Activated CD4-positive, alpha-beta memory T cell treated with anti-CD3 and anti-CD28 coated beads, Interleukin-2, amount 10 ng/mL, durations not matched to agents 7 days and 5 days (primary cell): ENCODE measurements at regions of chr10 and their contacts with region 1.

Region 1: GRCh38 chr10:88835096-88835909 is 16.3 kb downstream of the ANKRD22 start:
- DNase-seq: peak; percentile 91
- H3K4me3 Mint-ChIP-seq: no peak overlapping the region
- H3K27ac Mint-ChIP-seq: no peak overlapping the region
- H3K4me1 Mint-ChIP-seq: peaks cover 32% of the 10 kb centered on the region
- H3K27me3 Mint-ChIP-seq: no peaks in the 10 kb centered on the region

Region 2: DNA sequence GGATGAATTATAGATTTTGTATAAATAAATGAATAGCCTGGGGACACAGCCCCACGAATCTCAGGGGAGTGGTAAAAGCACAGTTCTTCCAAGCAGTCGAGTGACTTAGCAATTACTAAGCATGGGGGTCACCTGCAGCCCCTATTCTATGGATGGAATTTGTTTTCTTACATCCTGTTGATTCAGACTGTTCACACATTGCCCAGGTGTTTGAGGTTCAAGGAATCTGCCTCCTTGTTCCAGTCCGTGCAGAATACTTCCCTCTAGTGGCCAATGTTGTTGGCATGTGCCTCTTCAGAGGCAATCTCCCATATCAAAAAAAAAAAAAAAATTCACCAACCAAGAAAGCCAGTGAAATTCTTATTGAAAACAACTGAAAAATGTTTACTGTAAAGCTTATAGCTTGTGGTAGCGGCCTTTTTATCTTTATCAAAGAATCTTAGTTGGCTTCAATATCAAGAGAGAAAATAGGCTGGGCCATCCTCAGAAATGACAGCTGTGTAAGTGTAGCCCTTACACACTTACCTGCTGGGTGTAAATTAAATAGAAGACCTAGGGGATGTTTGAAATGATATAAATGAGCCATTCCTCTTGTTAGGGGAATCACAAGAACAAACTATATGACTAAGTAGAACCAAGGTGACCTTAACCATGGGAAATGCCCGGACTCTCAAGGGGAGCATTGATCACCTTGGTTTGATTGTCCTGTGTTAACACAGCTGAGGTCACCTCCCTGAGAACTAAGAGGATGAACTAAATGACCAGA is 24.9 kb before region 1 on chr10:
- CTCF ChIA-PET with region 1: interaction called, 15 read pairs
- POLR2A ChIA-PET with region 1: no interaction called
- DNase-seq: peak; percentile 32
- H3K4me3 Mint-ChIP-seq: no peak overlapping the region
- H3K27ac Mint-ChIP-seq: no peak overlapping the region
- H3K4me1 Mint-ChIP-seq: peaks cover 3% of the 10 kb centered on the region
- H3K27me3 Mint-ChIP-seq: peaks cover 8% of the 10 kb centered on the region

Region 3: GRCh38 chr10:88848499-88848898 is 13.2 kb after region 1 on chr10:
- CTCF ChIA-PET with region 1: interaction called, 13 read pairs
- POLR2A ChIA-PET with region 1: interaction called, 4 read pairs
- DNase-seq: no peak
- H3K4me3 Mint-ChIP-seq: no peak overlapping the region
- H3K27ac Mint-ChIP-seq: no peak overlapping the region
- H3K4me1 Mint-ChIP-seq: peaks cover 17% of the 10 kb centered on the region
- H3K27me3 Mint-ChIP-seq: peaks cover 12% of the 10 kb centered on the region

Region 4: GRCh38 chr10:88880282-88881076 is 45.2 kb after region 1 on chr10:
- CTCF ChIA-PET with region 1: interaction called, 19 read pairs
- POLR2A ChIA-PET with region 1: interaction called, 36 read pairs
- DNase-seq: peak; percentile 84
- H3K4me3 Mint-ChIP-seq: peak overlapping the region; percentile 97
- H3K27ac Mint-ChIP-seq: peak overlapping the region; percentile 99
- H3K4me1 Mint-ChIP-seq: peaks cover 60% of the 10 kb centered on the region
- H3K27me3 Mint-ChIP-seq: no peaks in the 10 kb centered on the region

Region 5: GRCh38 chr10:88901206-88901983 is 66.1 kb after region 1 on chr10:
- CTCF ChIA-PET with region 1: interaction called, 40 read pairs
- POLR2A ChIA-PET with region 1: interaction called, 8 read pairs
- DNase-seq: no peak
- H3K4me3 Mint-ChIP-seq: no peak overlapping the region
- H3K27ac Mint-ChIP-seq: peak overlapping the region; percentile 36
- H3K4me1 Mint-ChIP-seq: peaks cover 48% of the 10 kb centered on the region
- H3K27me3 Mint-ChIP-seq: no peaks in the 10 kb centered on the region